ENCODE measurements at regions of chr4 and their contacts with region 1.

Region 1: GRCh38 chr4:138494931-138495330 is 252.8 kb upstream of the SLC7A11 start:
- H3K4me3 Mint-ChIP-seq: no peak overlapping the region
- H3K27ac Mint-ChIP-seq: no peak overlapping the region
- H3K4me1 Mint-ChIP-seq: peaks cover 18% of the 10 kb centered on the region
- H3K27me3 Mint-ChIP-seq: peaks cover 20% of the 10 kb centered on the region

Region 2: GRCh38 chr4:138182838-138183426 is 312.0 kb before region 1 on chr4:
- intact Hi-C with region 1: loop called (anchors 5 kb)
- H3K4me3 Mint-ChIP-seq: no peak overlapping the region
- H3K27ac Mint-ChIP-seq: peak overlapping the region; percentile 33
- H3K4me1 Mint-ChIP-seq: peaks cover 26% of the 10 kb centered on the region
- H3K27me3 Mint-ChIP-seq: no peaks in the 10 kb centered on the region

Region 3: DNA sequence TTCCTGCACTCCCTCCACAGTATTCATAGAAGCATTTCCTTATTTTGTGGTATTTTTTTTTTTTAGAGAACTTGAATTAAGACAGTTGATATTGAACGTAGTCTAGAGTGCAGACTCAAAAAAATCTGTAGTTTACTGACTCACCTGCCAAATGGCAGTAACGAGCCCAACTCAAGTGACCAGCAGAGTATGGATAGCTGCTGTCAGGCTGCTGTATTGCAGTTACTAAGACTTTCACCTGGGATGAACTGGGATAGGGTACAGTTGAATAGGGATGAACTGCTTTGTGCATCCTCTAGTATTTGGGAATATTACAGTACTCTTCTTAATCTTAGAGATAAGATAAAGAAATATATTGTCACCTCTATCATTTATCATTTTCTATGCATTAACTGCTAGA is 245.8 kb before region 1 on chr4:
- intact Hi-C with region 1: loop called (anchors 5 kb)
- H3K4me3 Mint-ChIP-seq: no peak overlapping the region
- H3K27ac Mint-ChIP-seq: no peak overlapping the region
- H3K4me1 Mint-ChIP-seq: peaks cover 8% of the 10 kb centered on the region
- H3K27me3 Mint-ChIP-seq: no peaks in the 10 kb centered on the region

Region 4: DNA sequence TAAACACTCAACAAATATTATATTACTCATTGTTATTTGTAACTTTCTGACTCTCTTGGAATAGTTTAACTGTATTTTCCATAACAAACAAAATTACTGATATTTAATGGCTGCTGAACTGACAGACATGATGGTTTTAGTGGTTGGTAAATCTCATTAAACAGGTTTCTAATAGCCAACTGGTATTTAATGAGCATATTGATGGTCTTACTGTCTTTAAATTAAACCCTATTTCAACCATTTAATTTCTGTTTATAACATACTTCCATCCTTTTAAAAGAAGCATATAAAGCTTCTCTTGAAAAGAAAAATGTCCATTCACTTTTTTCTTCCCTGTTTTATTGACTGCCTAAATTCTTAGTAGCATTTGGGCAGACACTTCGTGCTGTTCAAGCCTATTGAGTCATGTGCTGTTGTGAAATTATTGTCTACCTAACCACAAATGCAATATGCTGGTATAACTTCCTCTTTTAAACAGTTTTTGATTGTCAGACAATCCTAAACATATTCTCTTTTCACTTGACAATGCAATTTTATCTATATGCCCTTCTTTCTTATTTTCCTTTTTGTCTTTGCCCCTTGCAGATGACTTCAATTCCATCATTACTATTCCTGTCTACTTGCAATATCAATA is 88.9 kb before region 1 on chr4:
- intact Hi-C with region 1: loop called (anchors 10 kb)
- H3K4me3 Mint-ChIP-seq: peak overlapping the region; percentile 14
- H3K27ac Mint-ChIP-seq: peak overlapping the region; percentile 87
- H3K4me1 Mint-ChIP-seq: peaks cover 52% of the 10 kb centered on the region
- H3K27me3 Mint-ChIP-seq: no peaks in the 10 kb centered on the region

Region 5: DNA sequence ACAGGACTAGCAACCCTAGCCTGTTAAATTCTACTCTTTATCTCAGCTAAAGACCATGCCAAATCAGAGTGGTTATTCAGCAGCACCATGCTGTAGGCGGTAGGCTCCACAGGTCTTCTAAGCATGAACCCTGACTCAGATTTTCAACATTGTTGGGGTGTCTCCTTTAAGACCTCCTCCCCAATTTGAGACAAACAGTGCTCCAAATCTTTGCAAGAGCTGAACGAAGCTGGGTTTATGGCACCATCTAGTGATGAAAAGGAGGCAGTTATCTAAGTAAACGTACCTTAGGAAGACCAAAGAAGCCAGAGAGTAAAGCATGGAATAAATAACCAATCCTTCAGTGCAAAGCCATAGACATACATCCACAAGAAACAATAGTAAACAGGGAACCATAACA is 81.8 kb after region 1 on chr4:
- intact Hi-C with region 1: no loop called
- H3K4me3 Mint-ChIP-seq: no peak overlapping the region
- H3K27ac Mint-ChIP-seq: no peak overlapping the region
- H3K4me1 Mint-ChIP-seq: no peaks in the 10 kb centered on the region
- H3K27me3 Mint-ChIP-seq: no peaks in the 10 kb centered on the region

Region 6: GRCh38 chr4:138761638-138762220 is 266.8 kb after region 1 on chr4:
- intact Hi-C with region 1: no loop called
- H3K4me3 Mint-ChIP-seq: no peak overlapping the region
- H3K27ac Mint-ChIP-seq: no peak overlapping the region
- H3K4me1 Mint-ChIP-seq: no peaks in the 10 kb centered on the region
- H3K27me3 Mint-ChIP-seq: peaks cover 3% of the 10 kb centered on the region